CD8-positive, alpha-beta T cell (primary cell): ENCODE measurements at regions of chr2 and their contacts with region 1.

Region 1: DNA sequence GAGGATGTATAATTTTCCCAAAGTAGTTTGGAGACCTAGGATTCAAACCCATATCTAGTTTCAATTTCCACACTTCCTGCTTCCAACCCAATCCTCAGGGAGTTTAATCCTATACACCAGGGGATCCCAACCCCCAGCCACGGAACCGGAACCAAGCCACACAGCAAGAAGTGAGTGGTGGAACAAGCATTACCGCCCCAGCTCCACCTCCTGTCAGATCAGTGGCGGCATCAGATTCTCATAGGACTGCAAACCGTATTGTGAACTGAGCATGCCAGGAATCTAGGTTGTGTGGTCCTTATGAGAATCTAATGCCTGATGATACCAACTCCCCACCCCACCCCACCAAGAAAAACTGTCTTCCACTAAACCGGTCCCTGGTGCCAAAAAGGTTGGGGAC is 52.6 kb downstream of the PRPF40A start:
- DNase-seq: no peak
- ATAC-seq: no peak
- H3K4me3 ChIP-seq: no peak overlapping the region
- H3K4me3 Mint-ChIP-seq: no peak overlapping the region
- H3K27ac ChIP-seq: no peak overlapping the region
- H3K27ac Mint-ChIP-seq: no peak overlapping the region
- H3K4me1 ChIP-seq: no peaks in the 10 kb centered on the region
- H3K4me1 Mint-ChIP-seq: no peaks in the 10 kb centered on the region
- H3K27me3 ChIP-seq: no peaks in the 10 kb centered on the region
- H3K27me3 Mint-ChIP-seq: no peaks in the 10 kb centered on the region
- CTCF ChIP-seq: no peak

Region 2: DNA sequence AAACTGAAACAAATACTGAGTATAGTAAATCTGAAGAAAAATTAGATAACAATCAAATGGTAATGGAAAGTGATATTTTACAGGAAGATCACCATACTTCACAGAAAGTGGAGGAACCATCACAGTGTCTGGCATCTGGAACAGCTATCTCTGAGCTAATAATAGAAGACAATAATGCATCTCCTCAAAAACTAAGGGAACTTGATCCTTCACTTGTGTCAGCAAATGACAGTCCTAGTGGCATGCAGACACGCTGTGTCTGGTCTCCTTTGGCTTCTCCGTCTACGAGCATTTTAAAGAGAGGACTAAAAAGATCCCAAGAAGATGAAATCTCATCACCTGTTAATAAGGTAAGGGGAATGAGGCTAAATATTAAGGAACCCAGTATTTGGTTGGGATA is 1198.9 kb before region 1 on chr2:
- CTCF ChIA-PET with region 1: no interaction called
- POLR2A ChIA-PET with region 1: no interaction called
- intact Hi-C with region 1: loop called in 1 of 2 experiments (anchors 10 kb)
- DNase-seq: no peak
- ATAC-seq: no peak
- H3K4me3 ChIP-seq: no peak overlapping the region
- H3K4me3 Mint-ChIP-seq: no peak overlapping the region
- H3K27ac ChIP-seq: no peak overlapping the region
- H3K27ac Mint-ChIP-seq: no peak overlapping the region
- H3K4me1 ChIP-seq: no peaks in the 10 kb centered on the region
- H3K4me1 Mint-ChIP-seq: no peaks in the 10 kb centered on the region
- H3K27me3 ChIP-seq: no peaks in the 10 kb centered on the region
- H3K27me3 Mint-ChIP-seq: no peaks in the 10 kb centered on the region
- CTCF ChIP-seq: no peak

Region 3: GRCh38 chr2:152627351-152627957 is 37.2 kb before region 1 on chr2:
- CTCF ChIA-PET with region 1: no interaction called
- POLR2A ChIA-PET with region 1: no interaction called
- intact Hi-C with region 1: no loop called
- DNase-seq: peak in 2 of 9 experiments; percentile 7 to 21
- ATAC-seq: no peak
- H3K4me3 ChIP-seq: no peak overlapping the region
- H3K4me3 Mint-ChIP-seq: no peak overlapping the region
- H3K27ac ChIP-seq: no peak overlapping the region
- H3K27ac Mint-ChIP-seq: no peak overlapping the region
- H3K4me1 ChIP-seq: no peaks in the 10 kb centered on the region
- H3K4me1 Mint-ChIP-seq: no peaks in the 10 kb centered on the region
- H3K27me3 ChIP-seq: no peaks in the 10 kb centered on the region
- H3K27me3 Mint-ChIP-seq: peaks cover 9% of the 10 kb centered on the region
- CTCF ChIP-seq: no peak

Region 4: DNA sequence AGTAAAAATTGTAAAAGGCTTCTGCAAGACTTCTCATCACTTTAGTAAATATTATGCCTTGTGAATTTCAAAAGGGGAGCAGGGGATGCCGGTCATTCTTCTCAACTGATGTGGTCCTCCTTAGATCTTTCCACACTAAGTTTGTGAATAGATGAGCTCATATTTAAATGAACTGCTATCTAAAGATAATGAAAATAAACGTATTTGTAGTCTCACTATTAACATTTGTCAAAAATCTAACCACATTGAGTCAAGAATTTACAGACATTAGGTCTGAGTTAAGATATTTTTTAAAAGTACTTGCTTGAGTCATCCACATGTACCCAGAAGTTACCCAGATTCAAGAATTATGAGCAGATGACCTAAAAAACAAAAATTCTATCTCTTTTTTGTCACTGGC is 46.0 kb after region 1 on chr2:
- CTCF ChIA-PET with region 1: no interaction called
- POLR2A ChIA-PET with region 1: no interaction called
- intact Hi-C with region 1: loop called in 1 of 2 experiments (anchors 5 kb)
- DNase-seq: no peak
- ATAC-seq: no peak
- H3K4me3 ChIP-seq: no peak overlapping the region
- H3K4me3 Mint-ChIP-seq: no peak overlapping the region
- H3K27ac ChIP-seq: no peak overlapping the region
- H3K27ac Mint-ChIP-seq: no peak overlapping the region
- H3K4me1 ChIP-seq: peaks cover 14% of the 10 kb centered on the region
- H3K4me1 Mint-ChIP-seq: peaks cover 74% of the 10 kb centered on the region
- H3K27me3 ChIP-seq: no peaks in the 10 kb centered on the region
- H3K27me3 Mint-ChIP-seq: no peaks in the 10 kb centered on the region
- CTCF ChIP-seq: no peak

Region 5: DNA sequence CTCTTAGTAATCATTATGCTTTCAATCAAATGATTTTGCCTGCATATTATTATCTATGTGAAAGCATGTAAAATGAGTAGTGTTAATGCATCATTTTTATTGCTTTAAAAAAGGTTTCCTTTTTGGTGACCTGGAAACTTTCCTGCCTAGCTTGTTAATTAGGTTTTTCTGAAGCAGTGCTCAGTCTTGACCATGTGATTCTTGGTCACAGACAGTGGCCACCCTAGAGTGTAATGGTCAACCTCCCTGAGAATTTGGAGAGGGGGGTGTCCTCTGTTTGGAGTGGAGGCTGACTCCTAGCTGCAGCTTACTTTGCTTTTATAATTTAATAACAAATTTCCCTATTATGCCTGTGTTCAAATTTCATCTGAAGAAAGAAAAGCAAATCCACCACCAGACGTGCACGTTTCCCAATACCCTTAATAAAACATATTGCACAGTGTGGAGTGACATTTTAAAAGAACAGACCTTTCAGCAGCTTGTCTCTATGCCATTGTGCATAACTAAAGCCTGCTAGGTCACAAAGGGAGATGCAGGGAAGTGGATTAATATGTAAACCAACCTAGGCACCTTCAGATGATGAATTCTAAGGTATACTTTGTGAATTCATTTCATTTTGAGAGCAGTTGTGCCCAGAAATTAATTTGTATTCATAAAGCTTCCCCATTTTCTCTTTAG is 683.3 kb after region 1 on chr2:
- CTCF ChIA-PET with region 1: no interaction called
- POLR2A ChIA-PET with region 1: no interaction called
- intact Hi-C with region 1: no loop called
- DNase-seq: no peak
- ATAC-seq: no peak
- H3K4me3 ChIP-seq: no peak overlapping the region
- H3K4me3 Mint-ChIP-seq: no peak overlapping the region
- H3K27ac ChIP-seq: no peak overlapping the region
- H3K27ac Mint-ChIP-seq: no peak overlapping the region
- H3K4me1 ChIP-seq: no peaks in the 10 kb centered on the region
- H3K4me1 Mint-ChIP-seq: no peaks in the 10 kb centered on the region
- H3K27me3 ChIP-seq: no peaks in the 10 kb centered on the region
- H3K27me3 Mint-ChIP-seq: no peaks in the 10 kb centered on the region
- CTCF ChIP-seq: no peak